Transverse colon (tissue), 4 donors: ENCODE measurements at regions of chr14 and their contacts with region 1.

Region 1: DNA sequence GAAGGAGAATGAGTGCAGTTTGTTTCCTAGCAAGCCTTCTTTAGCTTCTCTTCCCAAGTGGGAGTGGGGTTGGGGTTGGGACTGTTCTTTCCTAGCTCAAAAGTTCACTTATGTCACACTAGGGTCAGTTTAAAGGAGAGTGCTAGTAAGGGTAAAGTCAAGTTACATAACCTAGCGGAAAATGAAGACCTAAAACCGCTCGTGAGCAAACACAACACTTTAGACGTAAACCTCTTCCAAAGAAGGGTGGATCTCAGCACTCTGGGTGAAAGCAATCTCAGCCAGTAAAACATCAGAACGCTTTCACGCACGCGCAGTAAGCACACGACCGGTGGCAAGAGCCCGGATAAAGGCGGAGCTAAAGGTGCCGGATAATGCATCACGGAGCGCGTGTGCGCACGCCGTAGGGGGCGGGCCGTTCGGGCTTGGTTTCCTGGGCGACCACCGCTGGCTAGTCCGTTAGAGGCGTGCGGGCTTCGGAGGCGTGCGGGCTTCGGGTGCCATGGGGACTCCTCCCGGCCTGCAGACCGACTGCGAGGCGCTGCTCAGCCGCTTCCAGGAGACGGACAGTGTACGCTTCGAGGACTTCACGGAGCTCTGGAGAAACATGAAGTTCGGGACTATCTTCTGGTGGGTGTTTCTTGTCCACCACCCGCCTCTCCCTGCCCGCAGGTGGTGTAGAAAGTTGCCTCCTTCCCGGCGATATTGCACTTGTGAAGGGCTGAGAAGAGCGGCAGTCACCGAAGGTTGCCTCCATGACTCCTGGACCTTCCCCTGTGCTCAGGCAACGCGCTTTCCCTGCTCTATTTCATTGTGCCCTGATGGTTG is at the start of gene SNAPC1:
- DNase-seq: peak; percentile 97
- H3K4me3 ChIP-seq: peak within 1 kb of the TSS; percentile 53 to 76 (median 70)
- H3K27ac ChIP-seq: peak within 1 kb of the TSS; percentile 77 to 91 (median 86)
- H3K4me1 ChIP-seq: peaks cover 7 to 34% (median 13%) of the 10 kb centered on the region in 4 donors
- H3K27me3 ChIP-seq: no peaks in the 10 kb centered on the region
- CTCF ChIP-seq: no peak
- EP300 ChIP-seq: no peak
- POLR2A ChIP-seq: peak; percentile 72
- total RNA-seq, gene SNAPC1: 0.20 to 5.1 (median 3.8) TPM in 3 of 4 donors, not detected in the other

Region 2: GRCh38 chr14:61694830-61695694 is 67.1 kb before region 1 on chr14 and contains the start of gene HIF1A:
- in situ Hi-C with region 1: no loop called
- intact Hi-C with region 1: loop called (anchors 10 kb)
- DNase-seq: peak; percentile 97
- H3K4me3 ChIP-seq: peak within 1 kb of the TSS; percentile 93 to 99 (median 96)
- H3K27ac ChIP-seq: peak within 1 kb of the TSS; percentile 98 to 99 (median 98)
- H3K4me1 ChIP-seq: peaks cover 0 to 41% (median 27%) of the 10 kb centered on the region in 4 donors
- H3K27me3 ChIP-seq: no peaks in the 10 kb centered on the region
- CTCF ChIP-seq: no peak
- EP300 ChIP-seq: no peak
- POLR2A ChIP-seq: peak; percentile 97
- total RNA-seq, gene HIF1A: 27.9 to 103 (median 76.1) TPM